Tibial artery (tissue), 4 donors: ENCODE measurements at regions of chr11 and their contacts with region 1.

Region 1: GRCh38 chr11:74981888-74982287 is 6.8 kb upstream of the NEU3 start:
- DNase-seq: no peak
- H3K4me3 ChIP-seq: no peak overlapping the region
- H3K27ac ChIP-seq: no peak overlapping the region
- H3K4me1 ChIP-seq: no peaks in the 10 kb centered on the region
- H3K27me3 ChIP-seq: no peaks in the 10 kb centered on the region
- CTCF ChIP-seq: no peak

Region 2: DNA sequence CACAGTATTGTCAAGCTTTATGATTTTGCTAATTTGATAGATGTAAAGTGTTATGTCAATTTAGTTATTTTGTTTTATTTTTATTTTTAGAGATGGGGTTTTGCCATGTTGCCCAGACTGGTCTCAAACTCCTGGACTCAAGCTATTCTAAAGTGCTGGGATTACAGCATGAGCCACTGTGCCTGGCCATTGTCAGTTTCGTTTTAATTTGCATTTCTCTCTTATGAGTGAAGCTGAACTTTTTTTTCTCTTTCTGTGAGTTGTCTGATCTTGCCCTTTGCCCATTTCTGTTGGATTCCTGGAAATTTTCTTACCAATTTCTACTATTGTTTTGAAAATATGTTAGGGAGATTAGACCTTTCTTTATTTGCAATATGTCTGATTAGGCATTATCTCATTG is 22.3 kb after region 1 on chr11:
- intact Hi-C with region 1: loop called (anchors 1 kb)
- DNase-seq: no peak
- H3K4me3 ChIP-seq: no peak overlapping the region
- H3K27ac ChIP-seq: no peak overlapping the region
- H3K4me1 ChIP-seq: no peaks in the 10 kb centered on the region
- H3K27me3 ChIP-seq: no peaks in the 10 kb centered on the region
- CTCF ChIP-seq: no peak